ENCODE measurements at regions of chr2 and their contacts with region 1.

Region 1: GRCh38 chr2:23199115-23199918 is 185.7 kb upstream of the KLHL29 start:
- DNase-seq: peak; percentile 60
- H3K4me3 ChIP-seq: no peak overlapping the region
- H3K27ac ChIP-seq: no peak overlapping the region
- H3K4me1 ChIP-seq: no peaks in the 10 kb centered on the region
- H3K27me3 ChIP-seq: peaks cover 26% of the 10 kb centered on the region
- CTCF ChIP-seq: peak; percentile 85

Region 2: GRCh38 chr2:23077596-23077995 is 121.7 kb before region 1 on chr2:
- CTCF ChIA-PET with region 1: no interaction called
- POLR2A ChIA-PET with region 1: no interaction called
- intact Hi-C with region 1: no loop called
- DNase-seq: no peak
- H3K4me3 ChIP-seq: no peak overlapping the region
- H3K27ac ChIP-seq: no peak overlapping the region
- H3K4me1 ChIP-seq: no peaks in the 10 kb centered on the region
- H3K27me3 ChIP-seq: peaks cover 35% of the 10 kb centered on the region
- CTCF ChIP-seq: no peak

Region 3: DNA sequence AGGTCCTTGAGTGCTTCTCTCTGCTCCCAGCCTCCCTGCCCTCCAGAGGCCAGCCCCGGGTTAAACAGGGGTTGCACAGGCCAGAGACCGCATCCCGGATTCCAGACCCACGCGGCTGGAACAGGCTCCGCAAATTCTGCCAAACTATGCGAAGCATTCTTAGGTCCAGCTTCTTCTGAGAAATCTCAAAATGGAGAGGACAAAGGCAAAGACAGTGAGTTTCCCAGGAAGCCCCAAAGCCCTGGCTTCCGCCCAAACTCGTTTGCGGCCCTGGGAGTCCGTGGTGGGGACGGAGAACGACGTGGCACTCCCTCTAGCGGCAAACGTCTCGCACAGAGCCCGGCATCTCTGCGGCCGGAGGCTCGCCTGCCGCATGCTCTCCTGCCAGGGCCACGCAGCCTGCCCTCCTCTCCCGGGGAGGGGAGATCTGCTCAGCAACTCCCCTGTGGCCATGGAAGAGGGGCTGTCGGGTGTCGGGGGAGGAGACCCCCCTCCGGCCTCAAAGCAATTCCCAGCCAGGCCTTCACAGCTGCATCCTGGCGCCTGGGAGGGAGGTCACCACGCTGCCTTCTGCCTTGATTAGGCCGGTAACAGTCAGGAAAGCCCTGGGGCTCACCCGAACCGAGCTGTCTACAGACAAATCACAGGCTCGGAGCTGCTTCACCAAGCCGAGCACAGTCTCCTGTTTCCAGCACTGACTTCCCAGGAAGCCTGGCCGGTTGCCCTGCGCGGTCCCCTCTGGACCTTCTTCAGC is 152.2 kb after region 1 on chr2:
- CTCF ChIA-PET with region 1: no interaction called
- POLR2A ChIA-PET with region 1: no interaction called
- intact Hi-C with region 1: loop called (anchors 1 kb)
- DNase-seq: peak; percentile 92
- H3K4me3 ChIP-seq: no peak overlapping the region
- H3K27ac ChIP-seq: no peak overlapping the region
- H3K4me1 ChIP-seq: no peaks in the 10 kb centered on the region
- H3K27me3 ChIP-seq: peaks cover 1% of the 10 kb centered on the region
- CTCF ChIP-seq: peak; percentile 95

Region 4: GRCh38 chr2:23460228-23460627 is 260.9 kb after region 1 on chr2:
- CTCF ChIA-PET with region 1: no interaction called
- POLR2A ChIA-PET with region 1: no interaction called
- intact Hi-C with region 1: loop called (anchors 10 kb)
- DNase-seq: peak; percentile 53
- H3K4me3 ChIP-seq: no peak overlapping the region
- H3K27ac ChIP-seq: no peak overlapping the region
- H3K4me1 ChIP-seq: no peaks in the 10 kb centered on the region
- H3K27me3 ChIP-seq: no peaks in the 10 kb centered on the region
- CTCF ChIP-seq: peak; percentile 69

Region 5: DNA sequence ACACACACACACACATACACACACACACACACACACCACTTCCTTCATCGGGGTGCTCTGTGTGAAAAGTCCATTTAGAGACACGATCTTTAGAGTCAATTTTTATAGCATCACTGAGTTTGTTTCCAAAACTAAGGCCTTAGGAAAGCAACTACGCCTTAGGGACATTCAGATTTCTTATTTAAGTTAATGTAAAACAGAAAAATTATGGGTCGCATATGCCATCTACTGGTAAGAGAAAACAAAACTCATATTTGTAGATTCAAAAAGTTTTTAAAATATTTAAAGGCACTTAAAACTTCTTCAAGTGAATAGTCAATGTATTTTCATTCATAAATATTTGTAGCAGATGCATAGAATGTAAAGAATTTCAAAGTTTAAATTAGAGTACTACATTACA is 561.4 kb after region 1 on chr2:
- CTCF ChIA-PET with region 1: no interaction called
- POLR2A ChIA-PET with region 1: no interaction called
- intact Hi-C with region 1: loop called (anchors 2 kb)
- DNase-seq: peak; percentile 72
- H3K4me3 ChIP-seq: no peak overlapping the region
- H3K27ac ChIP-seq: peak overlapping the region; percentile 29
- H3K4me1 ChIP-seq: peaks cover 55% of the 10 kb centered on the region
- H3K27me3 ChIP-seq: no peaks in the 10 kb centered on the region
- CTCF ChIP-seq: peak; percentile 64

Measured in A673 (cell line).